Activated CD8-positive, alpha-beta T cell treated with anti-CD3 and anti-CD28 coated beads, Interleukin-2, amount 10 ng/mL, durations not matched to agents 7 days and 5 days (primary cell): ENCODE measurements at regions of chr20 and their contacts with region 1.

Region 1: DNA sequence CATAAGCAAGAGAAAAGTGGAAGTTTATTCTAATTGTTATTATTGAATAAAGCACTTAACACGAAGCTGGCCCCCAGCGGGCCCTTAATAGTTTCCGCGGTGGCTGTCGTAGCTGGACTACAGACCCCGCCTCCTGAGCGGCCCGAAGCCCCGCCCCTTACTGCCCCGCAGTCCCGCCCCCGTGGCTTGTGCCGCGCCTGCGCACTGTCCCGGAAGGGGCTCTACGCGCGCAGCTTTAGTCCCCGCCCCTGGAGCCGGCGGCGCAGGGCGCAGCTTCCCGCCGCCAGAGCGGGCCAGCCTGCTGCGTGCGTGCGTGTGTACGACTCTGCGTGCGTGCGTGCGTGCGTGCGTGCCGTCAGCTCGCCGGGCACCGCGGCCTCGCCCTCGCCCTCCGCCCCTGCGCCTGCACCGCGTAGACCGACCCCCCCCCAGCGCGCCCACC is at the start of gene VAPB:
- DNase-seq: peak; percentile 96
- ATAC-seq: peak; percentile 98
- H3K4me3 Mint-ChIP-seq: peak within 1 kb of the TSS; percentile 88
- H3K27ac Mint-ChIP-seq: peak within 1 kb of the TSS; percentile 95
- H3K4me1 Mint-ChIP-seq: peaks cover 35% of the 10 kb centered on the region
- H3K27me3 Mint-ChIP-seq: peaks cover 8% of the 10 kb centered on the region
- total RNA-seq, gene VAPB: 34.5 to 36.8 TPM

Region 2: GRCh38 chr20:58309575-58310290 is 79.2 kb before region 1 on chr20 and contains the start of gene RAB22A:
- CTCF ChIA-PET with region 1: interaction called, 4 read pairs
- POLR2A ChIA-PET with region 1: interaction called, 14 read pairs
- DNase-seq: peak; percentile 86
- ATAC-seq: peak; percentile 68
- H3K4me3 Mint-ChIP-seq: peak within 1 kb of the TSS; percentile 93
- H3K27ac Mint-ChIP-seq: peak within 1 kb of the TSS; percentile 87
- H3K4me1 Mint-ChIP-seq: peaks cover 65% of the 10 kb centered on the region
- H3K27me3 Mint-ChIP-seq: no peaks in the 10 kb centered on the region
- total RNA-seq, gene RAB22A: 16.0 to 17.3 TPM

Region 3: GRCh38 chr20:58458180-58459057 is 69.5 kb after region 1 on chr20:
- CTCF ChIA-PET with region 1: no interaction called
- POLR2A ChIA-PET with region 1: no interaction called
- DNase-seq: no peak
- ATAC-seq: no peak
- H3K4me3 Mint-ChIP-seq: no peak overlapping the region
- H3K27ac Mint-ChIP-seq: no peak overlapping the region
- H3K4me1 Mint-ChIP-seq: peaks cover 11% of the 10 kb centered on the region
- H3K27me3 Mint-ChIP-seq: no peaks in the 10 kb centered on the region